ACHN (cell line): ENCODE measurements at regions of chr6 and their contacts with region 1.

Region 1: GRCh38 chr6:12289933-12290820 is at the start of gene EDN1:
- DNase-seq: peak; percentile 82

Region 2: DNA sequence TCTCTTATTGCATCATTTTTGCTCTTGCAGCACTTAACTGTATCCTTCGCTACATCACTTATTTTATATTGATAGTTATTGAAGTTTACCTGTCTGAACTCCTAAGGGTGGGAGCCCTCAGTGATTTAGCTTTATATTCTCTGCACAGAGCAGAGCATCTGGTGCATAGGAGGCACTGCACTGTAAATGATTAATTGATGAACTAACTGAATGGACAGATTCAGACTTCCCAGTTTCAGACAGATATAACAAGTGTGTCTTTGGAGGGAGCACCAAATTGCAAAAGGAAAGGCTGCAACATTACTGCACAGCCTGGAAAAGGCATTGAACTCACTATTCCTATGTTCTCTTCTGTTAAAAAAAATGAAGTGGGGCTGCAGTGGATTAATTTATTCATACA is 160.3 kb after region 1 on chr6:
- in situ Hi-C with region 1: no loop called
- DNase-seq: peak; percentile 26

Region 3: GRCh38 chr6:12504319-12504966 is 214.3 kb after region 1 on chr6:
- in situ Hi-C with region 1: no loop called
- DNase-seq: peak; percentile 47

Region 4: GRCh38 chr6:12605888-12606345 is 315.7 kb after region 1 on chr6:
- in situ Hi-C with region 1: loop called (anchors 10 kb)
- DNase-seq: peak; percentile 67